ENCODE measurements at regions of chr7 and their contacts with region 1.

Region 1: GRCh38 chr7:91082852-91083495 is 181.3 kb upstream of the FZD1 start:
- DNase-seq: no peak
- ATAC-seq: peak; percentile 36

Region 2: DNA sequence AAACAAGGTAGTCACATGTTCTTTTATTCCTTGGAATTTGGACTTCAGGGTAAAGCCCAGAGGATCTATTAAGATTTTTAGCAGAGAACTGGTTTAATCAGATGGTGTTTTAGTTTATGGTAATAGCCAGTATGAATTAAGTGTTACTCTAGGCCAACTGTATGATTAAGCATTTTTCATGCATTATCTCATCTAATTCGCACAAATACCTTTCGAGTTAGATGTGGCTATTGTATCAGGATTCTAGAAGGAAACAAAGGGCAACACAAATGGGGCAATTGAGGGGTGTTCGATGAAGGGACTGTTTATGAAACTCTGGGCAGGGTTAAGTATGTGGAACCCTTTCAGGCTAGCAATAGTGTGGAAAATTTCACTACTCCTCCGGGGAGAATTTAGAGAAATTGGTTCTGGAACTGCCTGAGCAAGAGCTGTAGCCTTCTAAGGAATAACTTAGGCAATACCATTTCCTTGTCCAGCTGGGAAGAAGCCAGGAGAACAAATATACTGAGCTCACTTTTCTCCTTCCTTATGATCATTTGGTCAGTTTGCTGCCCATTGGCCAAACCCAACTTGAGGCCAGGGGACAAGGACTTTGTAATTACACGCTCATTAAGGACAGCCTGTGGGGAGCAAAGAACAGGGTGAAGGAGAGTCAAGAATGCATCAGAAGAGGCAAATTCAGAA is 137.7 kb before region 1 on chr7:
- intact Hi-C with region 1: no loop called
- DNase-seq: no peak
- ATAC-seq: peak; percentile 82

Region 3: GRCh38 chr7:91193141-91193540 is 110.2 kb after region 1 on chr7:
- intact Hi-C with region 1: no loop called
- DNase-seq: no peak
- ATAC-seq: no peak

Region 4: GRCh38 chr7:91264924-91265681 is 182.1 kb after region 1 on chr7:
- intact Hi-C with region 1: loop called (anchors 5 kb)
- DNase-seq: peak; percentile 75
- ATAC-seq: peak; percentile 31